Left cardiac atrium (tissue), 4 donors: ENCODE measurements at regions of chr10 and their contacts with region 1.

Region 1: GRCh38 chr10:43105102-43105785 is 28.4 kb downstream of the RET start:
- DNase-seq: peak; percentile 81
- ATAC-seq: peak; percentile 96

Region 2: DNA sequence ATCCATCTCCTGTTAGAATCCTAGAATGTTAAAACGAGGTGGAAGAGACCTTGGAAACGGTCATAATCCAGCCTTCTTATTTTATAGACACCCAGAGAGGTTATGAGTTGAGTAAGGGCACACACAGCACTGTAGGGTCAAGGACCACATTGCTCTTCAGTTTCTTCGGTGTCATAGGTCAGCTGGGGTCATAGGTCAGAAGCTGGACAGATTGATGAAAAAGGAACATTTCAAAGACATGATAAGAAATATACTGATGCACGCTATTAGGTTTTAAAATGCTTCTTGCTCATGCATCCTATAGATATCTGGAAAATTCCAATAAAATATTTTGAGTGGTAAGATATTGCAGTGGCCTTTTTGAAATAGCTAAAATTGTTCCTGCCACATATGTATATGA is 382.7 kb before region 1 on chr10:
- intact Hi-C with region 1: no loop called
- DNase-seq: no peak
- ATAC-seq: no peak

Region 3: DNA sequence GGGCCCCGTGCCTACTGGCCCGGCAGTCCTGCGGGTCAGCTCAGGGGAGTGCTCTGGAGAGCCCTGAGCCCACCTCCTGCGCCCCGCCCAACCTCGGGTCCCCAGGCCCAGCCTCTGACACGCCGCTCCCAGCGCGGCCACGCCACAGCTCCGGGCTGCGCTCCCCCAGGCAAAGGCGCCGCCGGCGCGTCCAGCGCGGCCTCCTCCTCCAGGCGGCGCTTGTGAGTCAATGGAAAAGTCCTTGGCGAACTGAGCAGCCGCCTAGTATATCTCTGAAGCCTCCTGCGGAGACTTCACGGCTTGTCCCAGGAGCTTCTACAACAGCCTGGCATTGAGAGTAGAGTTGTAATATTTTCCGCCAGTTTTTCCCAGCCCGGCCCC is 352.1 kb before region 1 on chr10:
- intact Hi-C with region 1: loop called in 1 of 2 experiments (anchors 10 kb)
- DNase-seq: peak; percentile 85
- ATAC-seq: peak; percentile 87 to 92

Region 4: DNA sequence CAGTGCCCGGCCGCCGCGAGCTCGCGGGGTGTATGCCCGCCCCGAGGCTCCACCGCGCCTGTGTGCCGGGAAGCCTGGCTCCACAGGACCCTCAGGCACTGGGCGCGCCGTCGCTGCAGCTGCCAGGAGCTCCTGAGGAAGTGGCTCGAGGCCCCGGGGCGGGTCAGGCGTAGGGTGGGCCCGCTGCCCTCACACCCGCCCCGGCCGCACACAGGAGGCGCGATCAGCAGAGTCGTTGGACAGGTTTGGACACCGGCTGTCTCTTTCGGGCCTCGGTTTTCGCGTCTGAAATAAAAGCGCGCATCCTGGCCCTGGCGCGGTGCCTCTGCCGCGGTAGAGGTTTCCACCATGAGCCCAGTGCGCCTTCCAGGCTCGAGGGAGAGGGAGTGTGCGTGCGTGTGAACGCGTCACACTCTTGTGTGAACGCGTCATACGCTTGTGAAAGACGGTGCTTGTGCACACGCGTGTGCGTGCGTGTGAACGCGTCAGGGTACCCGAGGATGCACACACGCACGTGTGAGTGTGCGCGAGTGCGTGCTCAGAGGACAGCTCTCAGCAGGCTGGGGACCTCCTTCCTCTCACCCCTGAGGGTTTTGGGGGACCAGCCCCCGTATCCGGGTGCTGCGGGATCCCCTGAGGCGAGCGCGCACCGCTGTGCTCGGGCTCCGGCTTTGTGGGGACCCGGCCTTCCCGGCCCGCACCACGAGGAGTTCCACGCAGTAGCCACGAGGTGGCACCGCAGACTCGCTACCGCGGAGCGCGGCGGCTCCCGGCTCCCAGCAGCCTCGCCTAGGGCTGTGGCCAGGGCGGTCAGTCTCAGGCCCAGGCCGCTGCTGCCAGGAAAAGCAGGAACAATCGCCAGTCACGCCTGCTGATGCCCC is 238.9 kb before region 1 on chr10:
- intact Hi-C with region 1: loop called (anchors 1 to 5 kb)
- DNase-seq: peak; percentile 89
- ATAC-seq: peak; percentile 100

Region 5: GRCh38 chr10:42872865-42873643 is 232.2 kb before region 1 on chr10:
- intact Hi-C with region 1: loop called in 1 of 2 experiments (anchors 5 kb)
- DNase-seq: no peak
- ATAC-seq: no peak

Region 6: DNA sequence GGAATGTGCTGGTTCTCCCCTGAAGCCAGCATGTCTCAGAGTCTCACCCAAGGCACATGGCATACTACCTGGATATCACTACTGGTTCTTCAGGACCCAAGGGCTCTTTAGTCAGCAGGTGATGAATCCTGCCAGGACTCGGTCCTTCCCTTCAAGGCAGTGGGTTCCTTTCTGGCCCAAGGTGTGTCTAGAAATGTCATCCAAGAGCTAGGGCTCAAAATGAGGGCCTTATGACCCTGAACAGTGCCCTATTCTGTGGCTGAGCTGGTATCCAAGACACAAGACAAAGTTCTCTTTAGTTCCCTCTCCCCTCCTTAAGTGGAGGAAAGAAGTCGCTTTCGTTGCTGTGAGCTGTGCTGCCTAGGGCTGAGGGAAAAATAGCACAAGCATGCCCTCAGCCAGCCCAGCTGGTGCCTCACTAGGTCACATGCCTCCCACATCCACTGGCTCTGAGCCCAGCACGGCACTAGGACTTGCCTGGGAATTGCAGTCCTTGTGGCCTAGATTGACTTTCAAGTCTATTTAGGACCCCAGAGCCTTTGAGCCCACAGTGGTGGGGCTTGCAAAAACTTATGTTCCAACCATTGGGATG is 216.6 kb before region 1 on chr10:
- intact Hi-C with region 1: no loop called
- DNase-seq: no peak
- ATAC-seq: no peak

Region 7: GRCh38 chr10:44415121-44415520 is 1309.9 kb after region 1 on chr10:
- intact Hi-C with region 1: no loop called
- DNase-seq: no peak
- ATAC-seq: no peak